Right ventricle myocardium inferior (tissue), 1 donor: ENCODE measurements at regions of chr14 and their contacts with region 1.

Region 1: GRCh38 chr14:102304611-102305509 is at the start of gene MOK:
- DNase-seq: peak; percentile 96
- ATAC-seq: peak; percentile 97
- total RNA-seq, gene MOK: 9.4 TPM

Region 2: DNA sequence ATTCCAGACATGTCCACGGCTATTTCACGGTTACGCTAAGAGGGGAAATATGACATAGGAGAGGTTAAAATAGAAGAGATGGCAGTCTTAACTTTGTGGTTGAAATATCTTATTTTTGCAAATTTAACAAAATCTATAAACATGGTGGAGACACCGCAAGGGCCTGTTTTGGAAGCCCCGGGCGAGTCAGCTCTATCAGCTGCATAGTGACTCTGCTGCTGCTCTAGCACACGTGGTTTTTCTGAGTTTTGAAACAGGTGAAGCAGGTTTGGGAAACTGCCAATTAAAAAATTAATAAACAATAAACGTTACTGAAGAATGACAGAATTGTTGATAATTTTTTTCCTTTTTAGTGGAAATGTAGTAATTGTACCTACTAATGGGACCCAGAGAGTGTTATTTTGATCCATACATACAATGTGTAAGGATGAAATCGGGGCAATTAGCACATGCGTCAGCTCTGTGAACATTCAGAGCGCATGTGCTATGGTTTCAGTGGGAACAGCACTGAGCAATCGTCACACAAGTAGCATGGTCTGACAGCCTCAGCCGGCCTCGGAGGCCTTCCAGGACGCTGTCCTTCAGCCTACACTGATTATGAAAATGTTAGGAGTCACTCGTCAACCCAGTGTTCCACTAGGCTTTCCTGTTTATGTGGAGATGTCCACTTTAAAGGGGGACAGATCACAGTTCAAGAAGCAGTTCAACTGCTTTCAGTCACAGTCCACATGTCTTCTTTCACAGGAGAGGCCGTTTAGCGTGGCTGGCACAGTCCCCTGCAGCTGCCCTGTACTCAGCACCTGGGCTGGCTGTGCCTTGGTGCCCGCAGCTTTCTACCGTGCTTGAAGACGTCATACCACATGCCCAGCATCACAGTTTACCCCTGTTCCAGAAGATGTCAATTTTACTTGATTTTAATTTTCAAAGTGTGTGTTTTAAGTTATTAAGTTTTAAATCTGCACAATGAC is 51.7 kb before region 1 on chr14:
- intact Hi-C with region 1: loop called (anchors 5 kb)
- DNase-seq: no peak
- ATAC-seq: peak; percentile 87

Region 3: DNA sequence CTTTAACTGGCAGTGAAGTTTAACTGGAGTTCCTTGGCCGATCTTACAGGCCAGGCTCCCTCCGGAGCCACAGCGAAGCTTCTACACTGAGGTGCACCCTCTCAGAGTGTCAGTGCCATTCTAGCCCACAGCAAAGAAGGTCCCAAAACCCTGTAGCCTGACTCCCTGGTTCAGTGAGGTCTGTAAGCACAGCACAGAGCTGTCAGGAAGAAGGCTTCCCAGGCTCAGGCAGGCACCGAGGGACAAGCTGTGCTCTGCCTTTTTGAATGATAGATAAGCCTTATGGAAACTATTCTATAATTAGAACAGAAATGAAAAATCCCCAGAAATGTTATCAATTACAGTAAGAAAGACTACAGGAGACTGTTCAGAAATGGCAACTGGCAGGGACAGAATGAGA is 40.1 kb before region 1 on chr14:
- intact Hi-C with region 1: loop called (anchors 5 kb)
- DNase-seq: no peak
- ATAC-seq: peak; percentile 92

Region 4: GRCh38 chr14:102509744-102510615 is 205.1 kb after region 1 on chr14 and contains the start of gene ANKRD9:
- intact Hi-C with region 1: no loop called
- DNase-seq: peak; percentile 98
- ATAC-seq: peak; percentile 80
- total RNA-seq, gene ANKRD9: 148 TPM